Activated T-helper 1 cell treated with anti-CD3 and anti-CD28 coated beads, Interleukin-12 subunit alpha, Interleukin-12 subunit beta, Interleukin-2, Interleukin-4 antibody, amounts not matched to agents 30 ng/mL and 10 ng/mL and 1 ng/mL, durations not matched to agents 14 hours and 24 hours and 36 hours (primary cell): ENCODE measurements at regions of chr15 and their contacts with region 1.

Region 1: GRCh38 chr15:49235446-49236124 is 65.5 kb downstream of the GALK2 start:
- DNase-seq: peak; percentile 30
- H3K4me3 Mint-ChIP-seq: no peak overlapping the region
- H3K27ac Mint-ChIP-seq: peak overlapping the region; percentile 11
- H3K4me1 Mint-ChIP-seq: peaks cover 12% of the 10 kb centered on the region
- H3K27me3 Mint-ChIP-seq: no peaks in the 10 kb centered on the region

Region 2: GRCh38 chr15:48385031-48385830 is 850.4 kb before region 1 on chr15:
- intact Hi-C with region 1: no loop called
- DNase-seq: no peak
- H3K4me3 Mint-ChIP-seq: no peak overlapping the region
- H3K27ac Mint-ChIP-seq: no peak overlapping the region
- H3K4me1 Mint-ChIP-seq: no peaks in the 10 kb centered on the region
- H3K27me3 Mint-ChIP-seq: peaks cover 9% of the 10 kb centered on the region

Region 3: DNA sequence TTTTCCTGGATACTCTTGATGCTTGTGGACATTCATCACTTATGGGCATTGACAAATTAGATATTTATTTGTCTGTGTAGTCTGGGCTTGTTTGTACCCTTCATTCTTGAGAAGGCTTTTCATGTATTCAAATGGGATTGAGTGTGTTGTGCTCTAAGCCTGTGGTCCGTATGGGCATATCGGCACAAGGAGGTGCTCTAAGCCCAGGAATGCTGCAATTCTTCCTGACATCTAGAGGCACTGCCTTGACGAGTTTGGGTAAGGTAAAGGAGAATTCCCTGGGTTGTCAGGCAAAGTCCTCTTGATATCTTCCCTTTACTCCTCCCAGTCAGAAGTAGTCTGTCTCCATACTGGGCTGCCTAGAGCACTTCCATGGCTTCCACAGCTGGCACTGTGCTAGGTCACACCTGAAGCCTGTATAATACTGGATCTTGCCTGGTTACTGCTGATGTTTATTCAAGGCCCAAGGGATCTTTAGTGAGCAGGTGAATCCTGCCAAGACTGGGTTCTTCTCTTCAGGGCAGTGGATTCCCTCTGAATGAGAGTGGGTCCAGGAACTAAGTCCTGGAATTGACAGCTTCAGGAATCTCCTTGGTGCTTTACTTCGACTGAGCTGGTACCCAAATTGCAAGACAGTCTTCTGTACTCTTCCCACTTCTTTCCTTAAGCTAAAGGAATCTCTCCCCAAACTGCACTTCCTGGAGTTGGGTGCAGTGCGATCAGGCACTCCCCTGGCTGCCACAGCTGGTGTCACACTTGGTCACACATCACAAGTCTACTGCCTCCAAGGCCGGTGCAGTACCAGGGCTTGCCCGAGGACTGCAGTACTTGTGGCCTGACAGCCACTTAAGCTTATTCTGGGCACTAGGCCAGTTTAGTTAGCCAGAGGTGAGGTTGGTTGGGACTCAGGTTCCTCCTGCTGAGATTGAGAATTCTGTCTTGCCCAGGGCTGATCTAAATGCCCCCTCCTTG is 19.5 kb before region 1 on chr15:
- intact Hi-C with region 1: no loop called
- DNase-seq: no peak
- H3K4me3 Mint-ChIP-seq: no peak overlapping the region
- H3K27ac Mint-ChIP-seq: no peak overlapping the region
- H3K4me1 Mint-ChIP-seq: no peaks in the 10 kb centered on the region
- H3K27me3 Mint-ChIP-seq: no peaks in the 10 kb centered on the region

Region 4: GRCh38 chr15:49282366-49282765 is 46.8 kb after region 1 on chr15:
- intact Hi-C with region 1: loop called (anchors 5 kb)
- DNase-seq: no peak
- H3K4me3 Mint-ChIP-seq: no peak overlapping the region
- H3K27ac Mint-ChIP-seq: no peak overlapping the region
- H3K4me1 Mint-ChIP-seq: peaks cover 24% of the 10 kb centered on the region
- H3K27me3 Mint-ChIP-seq: no peaks in the 10 kb centered on the region

Region 5: GRCh38 chr15:49421991-49422390 is 186.4 kb after region 1 on chr15:
- intact Hi-C with region 1: loop called (anchors 1 kb)
- DNase-seq: no peak
- H3K4me3 Mint-ChIP-seq: no peak overlapping the region
- H3K27ac Mint-ChIP-seq: peak overlapping the region; percentile 57
- H3K4me1 Mint-ChIP-seq: peaks cover 4% of the 10 kb centered on the region
- H3K27me3 Mint-ChIP-seq: peaks cover 6% of the 10 kb centered on the region

Region 6: GRCh38 chr15:50003786-50004334 is 768.3 kb after region 1 on chr15:
- intact Hi-C with region 1: loop called (anchors 5 kb)
- DNase-seq: peak; percentile 59
- H3K4me3 Mint-ChIP-seq: no peak overlapping the region
- H3K27ac Mint-ChIP-seq: peak overlapping the region; percentile 40
- H3K4me1 Mint-ChIP-seq: peaks cover 15% of the 10 kb centered on the region
- H3K27me3 Mint-ChIP-seq: no peaks in the 10 kb centered on the region

Region 7: DNA sequence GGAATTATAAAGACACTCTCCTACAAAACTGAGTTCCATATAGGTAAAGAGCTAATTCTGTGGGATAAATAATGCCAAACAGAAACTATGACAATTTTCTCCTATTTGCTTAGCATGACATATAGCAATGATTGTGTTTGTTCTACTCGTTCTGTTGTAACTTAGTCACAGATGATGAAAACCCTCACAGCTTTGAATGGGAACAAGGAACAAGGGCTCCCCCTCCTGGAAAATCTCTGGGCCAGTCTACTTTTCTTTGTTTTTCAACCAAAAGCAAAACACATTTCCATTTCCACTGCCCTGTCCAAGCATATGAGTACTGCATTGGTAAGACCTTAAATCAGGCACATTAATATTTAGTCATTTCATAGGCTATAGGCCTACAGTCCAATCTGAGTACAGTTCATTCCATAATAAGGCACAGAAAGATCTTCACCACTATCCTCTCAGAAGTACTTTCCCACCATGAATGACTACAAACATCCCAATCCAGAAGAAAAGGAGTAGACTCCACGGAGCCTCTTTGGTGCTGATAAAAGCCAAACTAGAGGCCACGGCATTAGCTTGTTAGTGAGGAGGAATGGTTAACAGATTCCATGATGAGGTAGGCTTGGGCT is 816.3 kb after region 1 on chr15:
- intact Hi-C with region 1: loop called (anchors 1 kb)
- DNase-seq: peak; percentile 29
- H3K4me3 Mint-ChIP-seq: no peak overlapping the region
- H3K27ac Mint-ChIP-seq: peak overlapping the region; percentile 44
- H3K4me1 Mint-ChIP-seq: peaks cover 49% of the 10 kb centered on the region
- H3K27me3 Mint-ChIP-seq: no peaks in the 10 kb centered on the region

Region 8: GRCh38 chr15:50145451-50145872 is 909.9 kb after region 1 on chr15:
- intact Hi-C with region 1: loop called (anchors 1 kb)
- DNase-seq: no peak
- H3K4me3 Mint-ChIP-seq: no peak overlapping the region
- H3K27ac Mint-ChIP-seq: no peak overlapping the region
- H3K4me1 Mint-ChIP-seq: peaks cover 62% of the 10 kb centered on the region
- H3K27me3 Mint-ChIP-seq: no peaks in the 10 kb centered on the region

Region 9: DNA sequence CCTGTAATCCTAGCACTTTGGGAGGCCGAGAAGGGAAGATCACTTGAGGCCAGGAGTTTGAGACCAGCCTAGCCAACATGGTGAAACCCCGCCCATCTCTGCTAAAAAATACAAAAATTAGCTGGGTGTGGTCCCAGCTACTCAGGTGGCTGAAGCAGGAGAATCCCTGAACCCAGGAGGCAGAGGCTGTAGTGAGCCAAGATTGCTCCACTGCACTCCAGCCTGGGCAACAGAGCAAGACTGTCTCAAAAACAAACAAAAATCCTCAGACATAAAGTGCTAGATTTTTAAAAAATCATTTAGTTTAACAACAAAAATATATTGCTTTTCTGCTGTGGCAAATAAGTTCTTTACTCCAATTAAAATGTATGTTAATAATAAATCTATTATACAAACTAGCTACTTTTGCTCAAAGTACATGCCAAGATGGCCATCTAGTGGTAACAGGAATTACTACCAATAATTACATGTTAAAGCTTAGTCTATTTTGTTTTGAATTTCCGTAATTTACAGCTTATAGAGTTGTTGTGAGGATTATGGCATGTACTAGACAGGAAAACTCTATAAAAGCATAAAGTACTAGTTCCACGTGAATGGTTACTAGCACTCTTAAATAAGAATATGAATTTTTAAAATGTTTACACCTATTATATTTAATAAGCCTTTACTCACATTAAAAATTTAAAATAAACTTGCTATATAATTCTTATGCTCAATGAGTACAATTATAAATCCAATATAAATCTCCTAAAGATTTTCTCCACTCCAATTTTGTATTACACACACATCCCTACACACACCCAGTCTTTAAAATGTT is 1080.4 kb after region 1 on chr15:
- intact Hi-C with region 1: loop called (anchors 5 kb)
- DNase-seq: no peak
- H3K4me3 Mint-ChIP-seq: no peak overlapping the region
- H3K27ac Mint-ChIP-seq: no peak overlapping the region
- H3K4me1 Mint-ChIP-seq: peaks cover 44% of the 10 kb centered on the region
- H3K27me3 Mint-ChIP-seq: no peaks in the 10 kb centered on the region